A549 (cell line): ENCODE measurements at regions of chr7 and their contacts with region 1.

Region 1: GRCh38 chr7:140517546-140518369 is 38.5 kb upstream of the MKRN1 start:
- DNase-seq: peak; percentile 93 to 94
- ATAC-seq: peak; percentile 98 to 99
- H3K4me3 ChIP-seq: no peak overlapping the region
- H3K27ac ChIP-seq: peak overlapping the region; percentile 50 to 72; a peak in 5 of 6 replicates
- H3K4me1 ChIP-seq: peaks cover 6% of the 10 kb centered on the region; the same call in 2 of the 3 replicates
- CTCF ChIP-seq: peak; percentile 92
- EP300 ChIP-seq: no peak
- POLR2A ChIP-seq: no peak
- RAD21 ChIP-seq: peak; percentile 99

Region 2: GRCh38 chr7:140533394-140533872 is 15.7 kb after region 1 on chr7:
- CTCF ChIA-PET with region 1: interaction called, 53 read pairs
- POLR2A ChIA-PET with region 1: no interaction called
- DNase-seq: no peak
- ATAC-seq: no peak
- H3K4me3 ChIP-seq: no peak overlapping the region
- H3K27ac ChIP-seq: no peak overlapping the region
- H3K4me1 ChIP-seq: no peaks in the 10 kb centered on the region
- CTCF ChIP-seq: no peak
- EP300 ChIP-seq: no peak
- POLR2A ChIP-seq: no peak
- RAD21 ChIP-seq: no peak

Region 3: DNA sequence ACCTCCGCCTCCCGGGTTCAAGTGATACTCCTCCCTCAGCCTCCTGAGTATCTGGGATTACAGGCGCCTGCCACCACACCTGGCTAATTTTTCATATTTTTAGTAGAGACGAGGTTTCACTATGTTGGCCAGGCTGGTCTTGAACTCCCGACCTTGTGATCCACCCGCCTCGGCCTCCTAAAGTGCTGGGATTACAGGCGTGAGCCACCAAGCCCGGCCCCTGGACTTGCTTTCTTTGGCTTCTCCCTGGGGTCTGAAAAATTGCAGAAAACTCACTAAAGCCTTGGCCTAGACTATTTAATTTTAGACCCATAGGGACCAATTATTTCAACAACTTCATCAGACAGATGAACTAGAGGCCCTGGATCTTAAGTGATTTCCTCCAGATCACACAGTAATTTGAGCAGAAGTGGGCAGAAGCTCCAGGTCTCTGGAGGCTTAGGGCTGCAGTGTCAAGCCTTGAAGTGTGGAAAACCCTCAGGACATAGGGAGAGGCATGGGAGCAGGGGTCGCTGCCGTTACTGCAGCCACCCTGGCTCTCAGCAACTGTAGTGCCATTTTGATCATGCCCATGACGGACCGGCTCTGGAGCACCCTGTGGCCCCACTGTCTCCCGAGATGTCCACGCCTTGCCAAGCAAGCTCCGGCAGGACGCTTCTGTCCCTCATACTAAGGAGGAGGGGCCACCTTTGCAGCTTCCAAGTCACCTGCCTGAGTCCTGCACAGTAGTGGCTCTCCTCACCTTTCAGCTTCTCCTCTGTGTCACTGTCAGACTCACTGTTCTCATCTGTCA is 50.5 kb after region 1 on chr7:
- CTCF ChIA-PET with region 1: interaction called, 10 read pairs
- POLR2A ChIA-PET with region 1: no interaction called
- DNase-seq: no peak
- ATAC-seq: no peak
- H3K4me3 ChIP-seq: no peak overlapping the region
- H3K27ac ChIP-seq: peak overlapping the region in 1 of 2 experiments; percentile 64; a peak in 2 of 6 replicates
- H3K4me1 ChIP-seq: peaks cover 24% of the 10 kb centered on the region
- CTCF ChIP-seq: no peak
- EP300 ChIP-seq: no peak
- POLR2A ChIP-seq: no peak
- RAD21 ChIP-seq: no peak

Region 4: DNA sequence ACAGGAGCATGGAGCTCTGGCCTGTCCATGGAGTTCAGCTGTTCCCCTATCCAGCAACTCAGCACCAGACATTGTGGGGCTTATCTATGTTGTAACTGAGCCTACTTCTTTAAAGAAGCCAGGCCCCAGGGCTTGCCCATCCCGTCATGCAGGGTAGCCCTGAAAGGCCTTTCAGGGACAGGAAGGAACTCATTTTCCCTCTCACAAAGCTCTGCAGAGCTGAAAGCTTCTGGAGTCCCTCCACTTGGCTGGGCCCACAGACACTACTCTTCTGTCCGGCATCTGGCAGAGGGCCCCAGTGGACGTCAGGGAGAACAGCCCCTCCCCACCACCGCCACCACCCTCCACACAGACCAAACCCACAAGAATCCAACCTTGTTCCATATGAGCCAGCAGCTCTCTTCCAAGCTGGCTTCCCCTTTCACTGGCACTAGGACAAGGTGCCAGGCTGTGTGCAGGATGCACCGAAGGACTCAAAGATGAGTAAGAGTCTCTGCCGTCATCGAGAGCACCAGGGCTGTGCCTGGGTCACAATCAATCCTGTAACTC is 89.8 kb after region 1 on chr7:
- CTCF ChIA-PET with region 1: interaction called, 19 read pairs
- POLR2A ChIA-PET with region 1: no interaction called
- DNase-seq: no peak
- ATAC-seq: no peak
- H3K4me3 ChIP-seq: no peak overlapping the region
- H3K27ac ChIP-seq: no peak overlapping the region
- H3K4me1 ChIP-seq: peaks cover 16% of the 10 kb centered on the region
- CTCF ChIP-seq: no peak
- EP300 ChIP-seq: no peak
- POLR2A ChIP-seq: no peak
- RAD21 ChIP-seq: no peak

Region 5: GRCh38 chr7:140625908-140626868 is 108.4 kb after region 1 on chr7:
- CTCF ChIA-PET with region 1: interaction called, 17 read pairs
- POLR2A ChIA-PET with region 1: interaction called, 5 read pairs
- DNase-seq: peak; percentile 68 to 83
- ATAC-seq: peak; percentile 85 to 89
- H3K4me3 ChIP-seq: no peak overlapping the region
- H3K27ac ChIP-seq: peak overlapping the region; percentile 64 to 77
- H3K4me1 ChIP-seq: peaks cover 33% of the 10 kb centered on the region
- CTCF ChIP-seq: no peak
- EP300 ChIP-seq: peak in 1 of 2 experiments; percentile 61; a peak in 2 of 5 replicates
- POLR2A ChIP-seq: no peak
- RAD21 ChIP-seq: peak in 1 of 2 experiments; percentile 12; a peak in 1 of 5 replicates

Region 6: GRCh38 chr7:140646931-140647647 is 129.3 kb after region 1 on chr7:
- CTCF ChIA-PET with region 1: interaction called, 493 read pairs
- POLR2A ChIA-PET with region 1: interaction called, 9 read pairs
- DNase-seq: peak; percentile 74 to 97
- ATAC-seq: peak; percentile 97 to 99
- H3K4me3 ChIP-seq: no peak overlapping the region
- H3K27ac ChIP-seq: peak overlapping the region in 1 of 2 experiments; percentile 62; a peak in 2 of 6 replicates
- H3K4me1 ChIP-seq: peaks cover 11% of the 10 kb centered on the region; the same call in 1 of the 3 replicates
- CTCF ChIP-seq: peak; percentile 62
- EP300 ChIP-seq: no peak
- POLR2A ChIP-seq: no peak
- RAD21 ChIP-seq: peak; percentile 57 to 60; a peak in 4 of 5 replicates

Region 7: GRCh38 chr7:140661121-140661520 is 143.4 kb after region 1 on chr7:
- CTCF ChIA-PET with region 1: interaction called, 38 read pairs
- POLR2A ChIA-PET with region 1: no interaction called
- DNase-seq: peak in 1 of 2 experiments; percentile 28
- ATAC-seq: peak; percentile 70 to 86; a peak in 5 of 6 replicates
- H3K4me3 ChIP-seq: no peak overlapping the region
- H3K27ac ChIP-seq: no peak overlapping the region
- H3K4me1 ChIP-seq: no peaks in the 10 kb centered on the region
- CTCF ChIP-seq: no peak; the same call in 2 of the 3 replicates
- EP300 ChIP-seq: no peak
- POLR2A ChIP-seq: no peak
- RAD21 ChIP-seq: peak; percentile 50 to 62